Esophagus muscularis mucosa (tissue), 4 donors: ENCODE measurements at regions of chr1 and their contacts with region 1.

Region 1: GRCh38 chr1:16009030-16009709 is 5.1 kb downstream of the SRARP start:
- DNase-seq: peak; percentile 95
- H3K4me3 ChIP-seq: no peak overlapping the region
- H3K27ac ChIP-seq: no peak overlapping the region
- H3K4me1 ChIP-seq: peaks cover 18 to 23% (median 20%) of the 10 kb centered on the region in 4 donors
- H3K27me3 ChIP-seq: no peaks in the 10 kb centered on the region
- CTCF ChIP-seq: peak; percentile 97 to 99 (median 99)
- EP300 ChIP-seq: no peak
- POLR2A ChIP-seq: no peak

Region 2: GRCh38 chr1:15735304-15736037 is 273.7 kb before region 1 on chr1:
- intact Hi-C with region 1: no loop called
- DNase-seq: no peak
- H3K4me3 ChIP-seq: no peak overlapping the region
- H3K27ac ChIP-seq: peak overlapping the region in 3 of 4 donors; percentile 41 to 44 (median 41)
- H3K4me1 ChIP-seq: peaks cover 12 to 29% (median 23%) of the 10 kb centered on the region in 4 donors
- H3K27me3 ChIP-seq: no peaks in the 10 kb centered on the region
- CTCF ChIP-seq: no peak
- EP300 ChIP-seq: no peak
- POLR2A ChIP-seq: no peak

Region 3: DNA sequence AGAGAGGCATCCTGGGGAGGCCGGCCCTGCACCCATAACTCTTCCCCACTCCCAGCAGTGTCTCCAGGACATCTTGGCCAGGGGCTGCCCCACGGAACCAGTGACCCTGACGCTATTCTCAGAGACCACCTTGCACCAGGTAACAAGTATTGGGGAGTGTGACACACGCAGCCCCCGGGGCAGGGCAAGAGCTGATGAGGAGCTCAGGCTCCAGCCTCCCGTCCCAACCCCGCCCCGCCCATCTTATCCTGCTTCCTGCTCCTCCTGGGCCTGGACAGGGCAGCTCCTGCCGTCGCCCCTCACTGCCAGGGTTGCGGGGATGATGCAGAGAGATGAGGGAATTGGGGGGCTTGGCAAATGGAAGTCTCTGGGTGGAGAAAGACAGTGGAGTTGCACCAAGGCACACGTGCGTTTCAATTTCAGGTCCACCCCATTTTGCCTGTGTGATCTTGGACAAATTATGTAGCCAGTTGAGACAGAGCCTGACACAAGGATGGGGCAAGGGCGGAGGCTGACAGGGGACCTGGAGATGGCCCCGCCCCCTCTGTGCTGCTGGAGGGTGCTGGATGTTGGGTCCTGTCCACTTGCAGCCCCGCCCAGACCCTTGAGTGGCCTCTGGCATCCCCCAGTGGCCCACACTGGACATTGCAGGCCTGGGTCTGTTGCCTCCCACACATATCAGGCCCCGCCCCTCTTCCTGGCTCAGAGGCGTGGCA is 23.4 kb after region 1 on chr1:
- intact Hi-C with region 1: loop called (anchors 1 kb)
- DNase-seq: no peak
- H3K4me3 ChIP-seq: no peak overlapping the region
- H3K27ac ChIP-seq: no peak overlapping the region
- H3K4me1 ChIP-seq: peaks cover 7 to 15% (median 14%) of the 10 kb centered on the region in 4 donors
- H3K27me3 ChIP-seq: no peaks in the 10 kb centered on the region
- CTCF ChIP-seq: peak in 2 of 3 experiments; percentile 91 to 100
- EP300 ChIP-seq: no peak
- POLR2A ChIP-seq: no peak